ENCODE measurements at regions of chr11 and their contacts with region 1.

Region 1: DNA sequence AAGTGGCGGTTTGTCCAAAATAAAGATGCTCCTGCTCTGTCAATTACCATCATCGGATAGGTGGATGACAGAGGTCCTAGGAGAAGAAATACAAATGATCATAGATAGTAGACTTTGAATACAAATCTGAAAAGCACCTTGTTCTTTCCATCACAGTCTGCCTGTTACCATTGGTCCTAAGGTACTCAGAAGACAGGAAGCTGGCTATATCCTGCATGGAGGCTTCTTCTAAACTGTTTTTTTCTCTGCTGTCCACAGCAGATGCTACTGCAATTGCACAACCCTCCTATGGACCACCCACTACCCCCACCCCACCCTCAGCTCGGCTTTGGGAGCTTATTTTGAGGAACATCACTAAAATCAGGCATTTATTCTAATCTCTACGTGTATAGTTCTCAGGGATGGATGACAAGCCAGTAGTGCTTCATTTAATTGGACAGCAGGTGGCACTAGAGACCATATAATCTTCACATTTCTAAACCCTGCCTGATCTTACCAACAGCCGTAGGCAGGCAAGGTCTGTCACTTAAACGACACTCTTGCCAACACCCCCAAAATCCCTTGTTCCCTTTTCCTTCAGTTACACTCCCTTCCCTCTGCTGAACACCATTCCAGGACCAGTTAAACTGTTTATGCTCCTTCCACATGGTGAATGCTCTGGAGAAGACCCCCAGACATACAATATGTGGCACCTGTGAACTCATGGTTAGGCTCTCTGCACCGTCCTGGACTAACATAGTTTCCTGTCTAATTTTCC is 6.6 kb upstream of the PTS start:
- DNase-seq: peak in 8 of 9 experiments; percentile 6 to 88 (median 44)
- ATAC-seq: peak; percentile 99
- H3K4me3 ChIP-seq: no peak overlapping the region
- H3K4me3 Mint-ChIP-seq: no peak overlapping the region
- H3K27ac ChIP-seq: no peak overlapping the region
- H3K27ac Mint-ChIP-seq: no peak overlapping the region
- H3K4me1 ChIP-seq: no peaks in the 10 kb centered on the region
- H3K4me1 Mint-ChIP-seq: peaks cover 4% of the 10 kb centered on the region
- H3K27me3 ChIP-seq: no peaks in the 10 kb centered on the region
- H3K27me3 Mint-ChIP-seq: no peaks in the 10 kb centered on the region
- CTCF ChIP-seq: peak; percentile 63

Region 2: GRCh38 chr11:112265721-112266409 is 46.2 kb after region 1 on chr11:
- CTCF ChIA-PET with region 1: interaction called, 481 read pairs
- POLR2A ChIA-PET with region 1: no interaction called
- intact Hi-C with region 1: no loop called
- DNase-seq: no peak
- ATAC-seq: no peak
- H3K4me3 ChIP-seq: no peak overlapping the region
- H3K4me3 Mint-ChIP-seq: no peak overlapping the region
- H3K27ac ChIP-seq: no peak overlapping the region
- H3K27ac Mint-ChIP-seq: no peak overlapping the region
- H3K4me1 ChIP-seq: no peaks in the 10 kb centered on the region
- H3K4me1 Mint-ChIP-seq: no peaks in the 10 kb centered on the region
- H3K27me3 ChIP-seq: no peaks in the 10 kb centered on the region
- H3K27me3 Mint-ChIP-seq: no peaks in the 10 kb centered on the region
- CTCF ChIP-seq: no peak

Region 3: GRCh38 chr11:112453601-112454577 is 234.2 kb after region 1 on chr11:
- CTCF ChIA-PET with region 1: no interaction called
- POLR2A ChIA-PET with region 1: no interaction called
- intact Hi-C with region 1: loop called in 1 of 2 experiments (anchors 1 kb)
- DNase-seq: peak in 4 of 9 experiments; percentile 31 to 48 (median 36)
- ATAC-seq: no peak
- H3K4me3 ChIP-seq: no peak overlapping the region
- H3K4me3 Mint-ChIP-seq: no peak overlapping the region
- H3K27ac ChIP-seq: no peak overlapping the region
- H3K27ac Mint-ChIP-seq: no peak overlapping the region
- H3K4me1 ChIP-seq: no peaks in the 10 kb centered on the region
- H3K4me1 Mint-ChIP-seq: no peaks in the 10 kb centered on the region
- H3K27me3 ChIP-seq: no peaks in the 10 kb centered on the region
- H3K27me3 Mint-ChIP-seq: peaks cover 5% of the 10 kb centered on the region
- CTCF ChIP-seq: peak; percentile 18

Region 4: GRCh38 chr11:112794331-112794846 is 574.7 kb after region 1 on chr11:
- CTCF ChIA-PET with region 1: no interaction called
- POLR2A ChIA-PET with region 1: no interaction called
- intact Hi-C with region 1: loop called in 1 of 2 experiments (anchors 5 kb)
- DNase-seq: no peak
- ATAC-seq: no peak
- H3K4me3 ChIP-seq: no peak overlapping the region
- H3K4me3 Mint-ChIP-seq: no peak overlapping the region
- H3K27ac ChIP-seq: no peak overlapping the region
- H3K27ac Mint-ChIP-seq: no peak overlapping the region
- H3K4me1 ChIP-seq: no peaks in the 10 kb centered on the region
- H3K4me1 Mint-ChIP-seq: peaks cover 2% of the 10 kb centered on the region
- H3K27me3 ChIP-seq: no peaks in the 10 kb centered on the region
- H3K27me3 Mint-ChIP-seq: peaks cover 4% of the 10 kb centered on the region
- CTCF ChIP-seq: no peak

Region 5: GRCh38 chr11:113314389-113315301 is 1095.0 kb after region 1 on chr11 and contains the start of gene TTC12:
- CTCF ChIA-PET with region 1: no interaction called
- POLR2A ChIA-PET with region 1: no interaction called
- intact Hi-C with region 1: loop called (anchors 10 kb)
- DNase-seq: peak; percentile 82 to 95 (median 90)
- ATAC-seq: peak; percentile 98
- H3K4me3 ChIP-seq: peak within 1 kb of the TSS; percentile 59 to 66
- H3K4me3 Mint-ChIP-seq: peak within 1 kb of the TSS; percentile 82
- H3K27ac ChIP-seq: peak within 1 kb of the TSS; percentile 81 to 87
- H3K27ac Mint-ChIP-seq: peak within 1 kb of the TSS; percentile 85
- H3K4me1 ChIP-seq: peaks cover 17% of the 10 kb centered on the region
- H3K4me1 Mint-ChIP-seq: peaks cover 30% of the 10 kb centered on the region
- H3K27me3 ChIP-seq: no peaks in the 10 kb centered on the region
- H3K27me3 Mint-ChIP-seq: no peaks in the 10 kb centered on the region
- CTCF ChIP-seq: no peak
- total RNA-seq, gene TTC12: 8.6 to 10.8 TPM

Region 6: GRCh38 chr11:113796663-113797259 is 1577.1 kb after region 1 on chr11:
- CTCF ChIA-PET with region 1: interaction called, 4 read pairs
- POLR2A ChIA-PET with region 1: no interaction called
- intact Hi-C with region 1: loop called in 1 of 2 experiments (anchors 2 kb)
- DNase-seq: peak in 3 of 9 experiments; percentile 18 to 50 (median 35)
- ATAC-seq: peak; percentile 57
- H3K4me3 ChIP-seq: no peak overlapping the region
- H3K4me3 Mint-ChIP-seq: no peak overlapping the region
- H3K27ac ChIP-seq: no peak overlapping the region
- H3K27ac Mint-ChIP-seq: no peak overlapping the region
- H3K4me1 ChIP-seq: no peaks in the 10 kb centered on the region
- H3K4me1 Mint-ChIP-seq: no peaks in the 10 kb centered on the region
- H3K27me3 ChIP-seq: no peaks in the 10 kb centered on the region
- H3K27me3 Mint-ChIP-seq: no peaks in the 10 kb centered on the region
- CTCF ChIP-seq: peak; percentile 60

Measured in CD8-positive, alpha-beta T cell (primary cell).